ENCODE measurements at regions of chr6 and their contacts with region 1.

Region 1: GRCh38 chr6:136635615-136636014 is 85.4 kb upstream of the MAP7 start:
- DNase-seq: no peak
- H3K27ac ChIP-seq: no peak overlapping the region
- CTCF ChIP-seq: no peak

Region 2: GRCh38 chr6:136175873-136176272 is 459.7 kb before region 1 on chr6:
- CTCF ChIA-PET with region 1: no interaction called
- POLR2A ChIA-PET with region 1: interaction called, 12 read pairs
- DNase-seq: no peak
- H3K27ac ChIP-seq: no peak overlapping the region
- CTCF ChIP-seq: no peak

Region 3: DNA sequence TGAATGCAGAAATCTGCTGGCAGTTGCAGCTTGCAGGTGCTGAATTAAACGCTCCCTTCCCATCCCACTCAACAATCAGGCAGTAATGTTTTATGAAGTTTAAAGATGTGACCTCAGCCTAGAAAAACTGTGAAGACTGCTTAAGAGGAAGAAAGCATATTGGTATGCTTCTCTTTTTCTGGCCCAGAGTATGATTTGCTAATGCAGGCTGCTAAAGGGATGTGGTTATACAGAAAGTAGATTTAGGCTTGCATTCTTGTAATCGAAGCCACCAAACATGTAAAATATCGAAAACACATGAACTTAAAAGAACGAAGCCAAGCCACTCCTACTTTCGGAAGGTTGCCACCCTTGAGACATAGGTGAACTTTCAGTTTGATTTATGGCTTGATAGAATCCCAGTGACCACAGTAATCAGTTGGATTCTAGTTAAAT is 115.9 kb after region 1 on chr6:
- CTCF ChIA-PET with region 1: no interaction called
- POLR2A ChIA-PET with region 1: no interaction called
- DNase-seq: no peak
- H3K27ac ChIP-seq: no peak overlapping the region
- CTCF ChIP-seq: no peak

Measured in RWPE1 (cell line).